CD8-positive, alpha-beta T cell (primary cell): ENCODE measurements at regions of chr9 and their contacts with region 1.

Region 1: GRCh38 chr9:38088006-38088925 is 19.2 kb upstream of the SHB start:
- DNase-seq: peak; percentile 34 to 85 (median 68)
- ATAC-seq: peak; percentile 86
- H3K4me3 ChIP-seq: no peak overlapping the region
- H3K4me3 Mint-ChIP-seq: no peak overlapping the region
- H3K27ac ChIP-seq: no peak overlapping the region
- H3K27ac Mint-ChIP-seq: no peak overlapping the region
- H3K4me1 ChIP-seq: no peaks in the 10 kb centered on the region
- H3K4me1 Mint-ChIP-seq: no peaks in the 10 kb centered on the region
- H3K27me3 ChIP-seq: no peaks in the 10 kb centered on the region
- H3K27me3 Mint-ChIP-seq: peaks cover 8% of the 10 kb centered on the region
- CTCF ChIP-seq: peak; percentile 97

Region 2: DNA sequence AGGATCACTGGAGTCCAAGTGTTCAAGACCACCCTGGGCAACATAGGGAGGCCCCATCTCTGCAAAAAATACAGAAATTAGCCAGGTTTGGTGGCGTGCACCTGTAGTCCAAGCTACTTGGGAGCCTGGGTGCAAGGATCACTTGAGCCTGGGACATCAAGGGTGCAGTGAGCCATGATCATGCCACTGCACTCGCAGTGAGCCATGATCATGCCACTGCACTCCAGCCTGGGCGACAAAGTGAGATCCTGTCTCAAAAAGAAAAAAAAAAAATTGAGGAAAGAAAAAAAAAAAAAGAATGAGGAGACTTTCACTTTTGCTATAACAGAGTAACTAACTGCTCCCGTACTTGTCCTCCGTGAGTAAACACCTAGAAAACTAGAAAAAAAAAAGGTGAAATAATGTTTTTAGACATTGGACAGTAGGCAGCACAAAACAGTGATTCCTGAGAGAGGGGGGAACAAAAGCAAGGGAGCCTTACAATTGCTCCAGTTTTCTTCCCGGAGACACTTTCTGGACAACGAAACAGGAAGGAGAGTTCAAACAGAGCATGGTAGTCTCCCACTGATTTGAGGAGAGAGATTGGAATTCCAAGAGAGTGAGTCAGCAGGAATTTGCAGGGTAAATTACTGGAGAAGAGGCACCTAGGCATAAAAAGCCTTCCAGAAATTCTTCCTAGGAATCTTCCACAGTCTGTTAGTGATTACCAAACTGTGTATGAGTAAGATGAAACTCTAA is 616.2 kb before region 1 on chr9:
- CTCF ChIA-PET with region 1: no interaction called
- POLR2A ChIA-PET with region 1: no interaction called
- intact Hi-C with region 1: loop called in 1 of 2 experiments (anchors 10 kb)
- DNase-seq: no peak
- ATAC-seq: no peak
- H3K4me3 ChIP-seq: peak overlapping the region; percentile 1 to 25
- H3K4me3 Mint-ChIP-seq: peak overlapping the region; percentile 73
- H3K27ac ChIP-seq: no peak overlapping the region
- H3K27ac Mint-ChIP-seq: peak overlapping the region; percentile 53
- H3K4me1 ChIP-seq: peaks cover 4% of the 10 kb centered on the region
- H3K4me1 Mint-ChIP-seq: peaks cover 13% of the 10 kb centered on the region
- H3K27me3 ChIP-seq: no peaks in the 10 kb centered on the region
- H3K27me3 Mint-ChIP-seq: peaks cover 8% of the 10 kb centered on the region
- CTCF ChIP-seq: no peak

Region 3: DNA sequence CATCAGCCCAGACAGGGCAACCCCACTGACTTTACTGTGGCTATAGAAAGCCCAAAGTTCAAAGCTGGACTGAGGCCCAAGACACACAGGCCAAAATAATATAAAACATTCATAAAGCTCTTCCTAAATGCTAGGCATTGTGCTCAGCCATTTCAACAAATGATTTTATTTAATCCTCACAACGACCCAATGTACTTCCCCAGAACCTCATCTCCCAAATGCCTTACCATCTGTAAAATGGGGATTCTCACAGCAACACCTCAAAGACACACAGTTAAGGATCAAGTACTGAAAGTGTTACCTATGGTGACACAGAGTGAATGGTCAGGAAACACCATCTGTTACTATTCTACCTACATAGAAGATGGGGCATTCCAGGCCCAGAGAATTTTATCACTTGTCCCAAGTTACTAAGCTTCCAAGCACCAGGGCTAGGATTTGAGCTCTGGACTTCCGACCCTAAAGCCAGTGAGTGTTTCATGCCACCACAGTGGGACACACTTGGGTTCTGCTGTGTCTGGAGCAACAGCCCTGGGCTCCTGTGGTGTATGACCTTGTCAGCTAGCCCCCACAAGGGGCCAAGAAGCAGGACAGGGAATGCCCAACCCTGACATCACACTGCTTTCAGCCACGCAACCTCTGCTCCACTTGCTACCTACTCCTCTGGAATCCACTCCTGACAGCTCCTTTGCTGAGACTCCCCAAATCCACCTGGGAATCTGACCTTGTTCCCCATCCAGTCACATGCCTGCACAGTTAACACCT is 34.4 kb before region 1 on chr9:
- CTCF ChIA-PET with region 1: interaction called, 10 read pairs
- POLR2A ChIA-PET with region 1: no interaction called
- intact Hi-C with region 1: no loop called
- DNase-seq: no peak
- ATAC-seq: no peak
- H3K4me3 ChIP-seq: no peak overlapping the region
- H3K4me3 Mint-ChIP-seq: no peak overlapping the region
- H3K27ac ChIP-seq: no peak overlapping the region
- H3K27ac Mint-ChIP-seq: no peak overlapping the region
- H3K4me1 ChIP-seq: no peaks in the 10 kb centered on the region
- H3K4me1 Mint-ChIP-seq: no peaks in the 10 kb centered on the region
- H3K27me3 ChIP-seq: no peaks in the 10 kb centered on the region
- H3K27me3 Mint-ChIP-seq: peaks cover 4% of the 10 kb centered on the region
- CTCF ChIP-seq: no peak

Region 4: GRCh38 chr9:38068866-38069629 is 19.2 kb before region 1 on chr9 and contains the start of gene SHB:
- CTCF ChIA-PET with region 1: interaction called, 39 read pairs
- POLR2A ChIA-PET with region 1: no interaction called
- intact Hi-C with region 1: no loop called
- DNase-seq: peak; percentile 68 to 90 (median 83)
- ATAC-seq: peak; percentile 81
- H3K4me3 ChIP-seq: peak within 1 kb of the TSS; percentile 78 to 88
- H3K4me3 Mint-ChIP-seq: peak within 1 kb of the TSS; percentile 85
- H3K27ac ChIP-seq: peak within 1 kb of the TSS; percentile 39 to 42
- H3K27ac Mint-ChIP-seq: peak within 1 kb of the TSS; percentile 74
- H3K4me1 ChIP-seq: peaks cover 24% of the 10 kb centered on the region
- H3K4me1 Mint-ChIP-seq: peaks cover 24% of the 10 kb centered on the region
- H3K27me3 ChIP-seq: peaks cover 3 to 4% of the 10 kb centered on the region in 2 experiments
- H3K27me3 Mint-ChIP-seq: no peaks in the 10 kb centered on the region
- CTCF ChIP-seq: peak; percentile 26
- total RNA-seq, gene SHB: 2.4 to 3.0 TPM

Region 5: DNA sequence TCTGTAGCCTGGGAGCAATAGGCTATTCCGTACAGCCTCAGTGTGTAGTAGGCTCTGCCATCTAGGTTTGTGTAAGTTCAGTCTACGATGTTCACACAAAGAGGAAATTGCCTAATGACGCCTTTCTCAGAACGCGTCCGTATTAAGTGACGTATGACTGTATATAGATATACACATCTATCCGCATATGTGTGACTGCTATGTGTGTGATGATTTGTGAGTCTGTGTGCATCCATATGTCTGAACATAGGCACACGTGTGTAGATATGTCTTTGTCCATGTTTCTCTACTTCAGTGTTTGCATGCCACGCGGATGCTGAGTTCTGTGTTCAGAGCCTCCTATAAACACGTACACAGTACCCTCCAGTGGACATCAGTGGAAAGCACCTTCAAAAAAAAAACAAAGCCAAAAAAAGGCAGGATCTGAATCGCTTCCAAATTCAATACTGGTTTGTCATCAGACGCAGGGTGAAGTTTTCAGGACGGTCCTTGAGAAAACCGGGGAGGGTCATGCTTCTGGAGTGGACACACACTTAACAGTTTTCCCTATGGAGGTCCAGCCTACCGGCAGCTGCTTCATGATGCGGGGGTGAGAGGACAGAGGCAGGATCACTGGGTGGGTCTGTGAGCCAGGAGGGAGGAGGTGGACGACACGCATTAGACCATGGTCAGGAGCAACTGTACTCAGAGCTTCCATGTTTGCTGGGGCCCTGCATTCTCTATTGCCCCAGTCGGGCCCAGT is 274.8 kb after region 1 on chr9:
- CTCF ChIA-PET with region 1: interaction called, 3 read pairs
- POLR2A ChIA-PET with region 1: no interaction called
- intact Hi-C with region 1: loop called (anchors 2 kb)
- DNase-seq: peak in 3 of 9 experiments; percentile 10 to 57 (median 36)
- ATAC-seq: peak; percentile 77
- H3K4me3 ChIP-seq: no peak overlapping the region
- H3K4me3 Mint-ChIP-seq: peak overlapping the region; percentile 72
- H3K27ac ChIP-seq: no peak overlapping the region
- H3K27ac Mint-ChIP-seq: no peak overlapping the region
- H3K4me1 ChIP-seq: no peaks in the 10 kb centered on the region
- H3K4me1 Mint-ChIP-seq: peaks cover 4% of the 10 kb centered on the region
- H3K27me3 ChIP-seq: no peaks in the 10 kb centered on the region
- H3K27me3 Mint-ChIP-seq: no peaks in the 10 kb centered on the region
- CTCF ChIP-seq: no peak

Region 6: DNA sequence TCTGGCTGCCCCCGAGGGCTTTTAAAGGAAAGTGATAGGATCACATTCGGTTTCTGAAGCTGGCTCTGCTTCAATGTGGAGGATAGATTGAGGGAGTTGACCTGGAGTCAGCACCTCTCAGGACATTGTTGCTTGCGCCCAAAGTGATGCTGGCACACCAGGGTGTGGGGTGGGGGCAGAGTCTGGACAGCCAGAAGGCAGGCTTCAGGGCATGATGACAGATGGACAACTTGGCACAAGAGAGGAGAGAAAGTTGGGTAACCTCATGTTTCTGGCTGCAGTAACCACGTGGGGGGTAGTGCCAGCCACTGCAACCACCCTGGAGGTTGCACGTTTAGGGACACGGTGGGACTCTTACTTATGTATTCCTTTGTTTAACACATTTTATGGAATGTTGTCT is 313.7 kb after region 1 on chr9:
- CTCF ChIA-PET with region 1: no interaction called
- POLR2A ChIA-PET with region 1: no interaction called
- intact Hi-C with region 1: loop called (anchors 2 to 10 kb)
- DNase-seq: no peak
- ATAC-seq: no peak
- H3K4me3 ChIP-seq: no peak overlapping the region
- H3K4me3 Mint-ChIP-seq: no peak overlapping the region
- H3K27ac ChIP-seq: no peak overlapping the region
- H3K27ac Mint-ChIP-seq: no peak overlapping the region
- H3K4me1 ChIP-seq: no peaks in the 10 kb centered on the region
- H3K4me1 Mint-ChIP-seq: no peaks in the 10 kb centered on the region
- H3K27me3 ChIP-seq: no peaks in the 10 kb centered on the region
- H3K27me3 Mint-ChIP-seq: peaks cover 21% of the 10 kb centered on the region
- CTCF ChIP-seq: no peak